ENCODE measurements at regions of chr18 and their contacts with region 1.

Region 1: DNA sequence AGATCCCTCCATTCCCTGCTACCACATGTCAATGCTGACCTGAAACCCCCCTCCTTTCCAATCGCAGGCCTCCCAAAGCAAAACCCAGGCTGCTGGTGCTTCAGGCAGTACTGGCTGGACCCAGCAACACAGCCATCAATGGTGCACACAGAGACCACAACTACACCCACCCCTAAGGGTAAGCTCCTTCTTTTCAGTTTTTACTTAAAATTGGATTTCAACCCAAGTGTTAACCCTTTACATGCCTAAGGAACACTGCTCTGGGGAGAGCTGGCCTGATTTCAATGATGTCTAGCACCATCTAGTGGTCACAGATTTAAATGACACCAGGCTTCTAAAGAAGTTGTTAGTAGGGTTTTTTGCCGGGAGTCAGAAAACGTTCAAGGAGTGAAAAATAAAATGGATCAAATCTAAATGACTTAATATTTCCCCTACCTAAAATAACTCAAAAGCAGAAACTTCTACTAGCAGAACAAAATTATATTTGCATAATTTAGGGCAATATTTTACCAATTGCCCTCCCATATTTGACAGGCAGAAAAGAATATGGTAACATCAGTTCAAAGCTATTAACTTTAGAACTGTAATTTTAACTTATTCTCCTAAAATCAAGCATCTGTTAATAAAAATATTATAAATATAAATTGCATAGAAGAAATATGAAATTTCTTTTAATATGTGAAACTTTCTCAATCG is 24.6 kb downstream of the FECH start:
- DNase-seq: peak; percentile 52
- ATAC-seq: peak; percentile 11
- H3K4me3 Mint-ChIP-seq: no peak overlapping the region
- H3K27ac Mint-ChIP-seq: no peak overlapping the region
- H3K4me1 Mint-ChIP-seq: no peaks in the 10 kb centered on the region
- H3K27me3 Mint-ChIP-seq: no peaks in the 10 kb centered on the region

Region 2: DNA sequence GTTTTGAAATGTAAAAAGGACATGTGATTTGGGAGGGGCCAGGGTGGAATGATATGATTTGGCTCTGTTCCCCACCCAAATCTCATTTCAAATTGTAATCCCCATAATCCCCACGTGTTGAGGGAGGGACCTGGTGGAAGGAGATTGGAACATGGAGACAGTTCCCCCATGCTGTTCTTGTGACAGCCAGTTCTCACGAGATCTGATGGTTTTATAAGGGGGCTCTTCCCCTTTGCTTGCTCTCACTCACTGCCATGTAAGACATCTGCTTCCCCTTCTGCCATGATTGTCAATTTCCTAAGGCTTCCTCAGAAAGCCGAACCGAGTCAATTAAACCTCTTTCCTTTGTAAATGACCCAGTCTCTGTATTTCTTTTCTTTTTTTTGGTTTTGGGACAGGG is 14.6 kb before region 1 on chr18:
- CTCF ChIA-PET with region 1: interaction called, 12 read pairs
- POLR2A ChIA-PET with region 1: no interaction called
- DNase-seq: no peak
- ATAC-seq: no peak
- H3K4me3 Mint-ChIP-seq: no peak overlapping the region
- H3K27ac Mint-ChIP-seq: no peak overlapping the region
- H3K4me1 Mint-ChIP-seq: peaks cover 11% of the 10 kb centered on the region
- H3K27me3 Mint-ChIP-seq: peaks cover 2% of the 10 kb centered on the region

Measured in activated CD8-positive, alpha-beta T cell treated with anti-CD3 and anti-CD28 coated beads, Interleukin-2, amount 10 ng/mL, durations not matched to agents 7 days and 5 days (primary cell).